GM12878 (cell line): ENCODE measurements at regions of chr15 and their contacts with region 1.

Region 1: GRCh38 chr15:90583471-90584252 is 53.9 kb downstream of the CRTC3 start:
- DNase-seq: no peak
- ATAC-seq: no peak
- H3K4me3 ChIP-seq: no peak overlapping the region
- H3K27ac ChIP-seq: no peak overlapping the region
- H3K4me1 ChIP-seq: peaks cover 5% of the 10 kb centered on the region; the same call in 1 of the 2 replicates
- H3K27me3 ChIP-seq: no peaks in the 10 kb centered on the region
- CTCF ChIP-seq: no peak
- EP300 ChIP-seq: no peak
- POLR2A ChIP-seq: no peak
- RAD21 ChIP-seq: no peak

Region 2: GRCh38 chr15:90264649-90265048 is 319.0 kb before region 1 on chr15:
- CTCF ChIA-PET with region 1: no interaction called
- POLR2A ChIA-PET with region 1: no interaction called
- RAD21 ChIA-PET with region 1: no interaction called
- SMC1A ChIA-PET with region 1: no interaction called
- in situ Hi-C with region 1: no loop called
- intact Hi-C with region 1: no loop called
- DNase-seq: no peak
- ATAC-seq: peak; percentile 39
- H3K4me3 ChIP-seq: peak overlapping the region; percentile 82
- H3K27ac ChIP-seq: peak overlapping the region; percentile 87
- H3K4me1 ChIP-seq: peaks cover 19% of the 10 kb centered on the region
- H3K27me3 ChIP-seq: no peaks in the 10 kb centered on the region
- CTCF ChIP-seq: no peak
- EP300 ChIP-seq: no peak
- POLR2A ChIP-seq: no peak
- RAD21 ChIP-seq: no peak

Region 3: GRCh38 chr15:90571063-90571541 is 12.6 kb before region 1 on chr15:
- CTCF ChIA-PET with region 1: interaction called, 11 read pairs
- POLR2A ChIA-PET with region 1: interaction called, 4 read pairs
- RAD21 ChIA-PET with region 1: interaction called, 4 read pairs
- SMC1A ChIA-PET with region 1: interaction called, 31 read pairs
- in situ Hi-C with region 1: no loop called
- intact Hi-C with region 1: no loop called
- DNase-seq: no peak
- ATAC-seq: peak; percentile 83
- H3K4me3 ChIP-seq: peak overlapping the region; percentile 3; the same call in 1 of the 2 replicates
- H3K27ac ChIP-seq: peak overlapping the region; percentile 61
- H3K4me1 ChIP-seq: peaks cover 32% of the 10 kb centered on the region
- H3K27me3 ChIP-seq: no peaks in the 10 kb centered on the region
- CTCF ChIP-seq: no peak
- EP300 ChIP-seq: no peak
- POLR2A ChIP-seq: no peak
- RAD21 ChIP-seq: no peak

Region 4: GRCh38 chr15:90610190-90610589 is 26.5 kb after region 1 on chr15:
- CTCF ChIA-PET with region 1: no interaction called
- POLR2A ChIA-PET with region 1: no interaction called
- RAD21 ChIA-PET with region 1: no interaction called
- SMC1A ChIA-PET with region 1: no interaction called
- in situ Hi-C with region 1: no loop called
- intact Hi-C with region 1: no loop called
- DNase-seq: no peak
- ATAC-seq: no peak
- H3K4me3 ChIP-seq: no peak overlapping the region
- H3K27ac ChIP-seq: no peak overlapping the region
- H3K4me1 ChIP-seq: no peaks in the 10 kb centered on the region
- H3K27me3 ChIP-seq: no peaks in the 10 kb centered on the region
- CTCF ChIP-seq: no peak
- EP300 ChIP-seq: no peak
- POLR2A ChIP-seq: no peak
- RAD21 ChIP-seq: no peak